ENCODE measurements at regions of chr11 and their contacts with region 1.

Region 1: GRCh38 chr11:108647701-108648527 is 17.0 kb upstream of the DDX10 start:
- DNase-seq: no peak
- ATAC-seq: peak; percentile 98
- H3K4me3 ChIP-seq: no peak overlapping the region
- H3K27ac ChIP-seq: no peak overlapping the region
- H3K4me1 ChIP-seq: no peaks in the 10 kb centered on the region
- H3K27me3 ChIP-seq: no peaks in the 10 kb centered on the region
- CTCF ChIP-seq: peak; percentile 86 to 88 (median 86)
- EP300 ChIP-seq: no peak
- POLR2A ChIP-seq: no peak
- RAD21 ChIP-seq: peak; percentile 99

Region 2: GRCh38 chr11:108121274-108122155 is 526.4 kb before region 1 on chr11 and contains the start of gene ACAT1:
- CTCF ChIA-PET with region 1: interaction called, 23 read pairs
- POLR2A ChIA-PET with region 1: interaction called, 3 read pairs
- RAD21 ChIA-PET with region 1: interaction called, 3 read pairs
- SMC1A ChIA-PET with region 1: interaction called, 20 read pairs
- in situ Hi-C with region 1: loop called (anchors 5 kb)
- intact Hi-C with region 1: no loop called
- DNase-seq: peak; percentile 71
- ATAC-seq: peak; percentile 98
- H3K4me3 ChIP-seq: peak within 1 kb of the TSS; percentile 73
- H3K27ac ChIP-seq: peak within 1 kb of the TSS; percentile 65
- H3K4me1 ChIP-seq: peaks cover 10% of the 10 kb centered on the region
- H3K27me3 ChIP-seq: no peaks in the 10 kb centered on the region
- CTCF ChIP-seq: peak; percentile 7 to 39 (median 10); a peak in 1 of 6 replicates
- EP300 ChIP-seq: no peak
- POLR2A ChIP-seq: peak; percentile 98
- RAD21 ChIP-seq: no peak
- polyA plus RNA-seq, gene ACAT1: 58.2 to 93.5 TPM

Region 3: DNA sequence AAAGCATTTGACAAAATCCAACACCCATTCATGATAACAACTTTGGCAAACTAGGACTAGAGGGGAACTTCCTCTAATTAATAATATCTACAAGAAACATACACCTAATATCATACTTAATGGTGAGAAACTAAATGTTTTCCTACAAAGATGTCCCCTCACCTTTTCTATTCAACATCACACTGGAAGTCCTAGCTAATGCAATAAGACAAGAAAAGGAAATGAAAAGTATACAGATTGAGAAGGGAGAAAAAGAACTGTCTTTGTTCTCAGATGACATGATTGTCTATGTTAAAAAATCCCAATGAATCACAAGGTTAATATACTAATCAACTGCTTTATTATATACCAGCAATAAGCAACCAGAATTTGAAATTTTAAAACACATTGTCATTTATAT is 233.0 kb before region 1 on chr11:
- CTCF ChIA-PET with region 1: interaction called, 93 read pairs
- POLR2A ChIA-PET with region 1: no interaction called
- RAD21 ChIA-PET with region 1: interaction called, 26 read pairs
- SMC1A ChIA-PET with region 1: interaction called, 82 read pairs
- in situ Hi-C with region 1: loop called (anchors 5 kb)
- intact Hi-C with region 1: loop called (anchors 1 kb)
- DNase-seq: no peak
- ATAC-seq: no peak
- H3K4me3 ChIP-seq: no peak overlapping the region
- H3K27ac ChIP-seq: no peak overlapping the region
- H3K4me1 ChIP-seq: no peaks in the 10 kb centered on the region
- H3K27me3 ChIP-seq: no peaks in the 10 kb centered on the region
- CTCF ChIP-seq: no peak
- EP300 ChIP-seq: no peak
- POLR2A ChIP-seq: no peak
- RAD21 ChIP-seq: no peak

Region 4: GRCh38 chr11:108511851-108512474 is 136.0 kb before region 1 on chr11:
- CTCF ChIA-PET with region 1: interaction called, 16 read pairs
- POLR2A ChIA-PET with region 1: no interaction called
- RAD21 ChIA-PET with region 1: interaction called, 11 read pairs
- SMC1A ChIA-PET with region 1: interaction called, 5 read pairs
- in situ Hi-C with region 1: no loop called
- intact Hi-C with region 1: no loop called
- DNase-seq: no peak
- ATAC-seq: no peak
- H3K4me3 ChIP-seq: no peak overlapping the region
- H3K27ac ChIP-seq: no peak overlapping the region
- H3K4me1 ChIP-seq: no peaks in the 10 kb centered on the region
- H3K27me3 ChIP-seq: no peaks in the 10 kb centered on the region
- CTCF ChIP-seq: no peak
- EP300 ChIP-seq: no peak
- POLR2A ChIP-seq: no peak
- RAD21 ChIP-seq: no peak

Region 5: DNA sequence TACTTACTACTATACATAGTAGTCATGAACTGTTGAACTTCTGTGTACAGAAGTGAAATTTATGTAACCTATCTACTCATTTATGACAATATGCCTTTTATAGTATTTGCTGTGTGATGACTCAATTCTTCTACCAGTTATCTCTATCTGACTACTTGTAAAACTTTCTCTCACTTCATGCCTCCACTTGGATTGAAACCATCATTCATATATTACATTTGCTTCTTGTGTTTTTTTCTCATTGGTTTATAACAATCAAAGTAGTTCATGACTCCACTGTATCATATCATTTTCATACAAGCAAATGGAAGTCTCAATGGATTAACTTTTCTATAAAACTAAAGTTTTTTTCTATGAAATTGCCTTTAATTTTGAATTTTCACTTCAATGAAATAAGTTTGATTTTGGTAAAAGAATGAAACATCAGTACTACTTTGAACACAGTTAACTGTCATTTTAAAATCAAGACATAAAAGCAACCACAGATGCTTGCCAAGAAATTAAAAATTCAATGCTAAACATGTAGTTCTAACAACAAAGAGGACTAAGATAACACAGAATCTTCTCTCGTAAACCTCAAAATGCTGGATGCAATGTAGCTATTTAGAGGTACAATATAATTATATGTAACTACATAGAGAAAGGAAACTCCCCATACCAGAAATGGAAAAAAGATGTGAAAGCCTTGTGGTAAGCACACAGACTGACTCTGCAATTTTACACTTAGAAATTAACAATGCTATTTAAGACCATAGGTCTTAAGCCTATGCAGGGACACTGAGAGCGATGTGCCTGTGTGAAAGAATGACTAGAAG is 26.7 kb before region 1 on chr11:
- CTCF ChIA-PET with region 1: interaction called, 15 read pairs
- POLR2A ChIA-PET with region 1: interaction called, 3 read pairs
- RAD21 ChIA-PET with region 1: interaction called, 18 read pairs
- SMC1A ChIA-PET with region 1: interaction called, 52 read pairs
- in situ Hi-C with region 1: no loop called
- intact Hi-C with region 1: no loop called
- DNase-seq: peak; percentile 86
- ATAC-seq: peak; percentile 95
- H3K4me3 ChIP-seq: peak overlapping the region; percentile 39; the same call in 1 of the 2 replicates
- H3K27ac ChIP-seq: peak overlapping the region; percentile 93
- H3K4me1 ChIP-seq: peaks cover 18% of the 10 kb centered on the region
- H3K27me3 ChIP-seq: no peaks in the 10 kb centered on the region
- CTCF ChIP-seq: no peak
- EP300 ChIP-seq: peak; percentile 89 to 94
- POLR2A ChIP-seq: 0 out of 2 replicates have a peak, but pooled peaks have one; percentile 28
- RAD21 ChIP-seq: peak; percentile 16; the same call in 1 of the 2 replicates